ENCODE measurements at regions of chr11 and their contacts with region 1.

Region 1: GRCh38 chr11:3217676-3218482 is 734 bp downstream of the MRGPRG start:
- DNase-seq: peak; percentile 12 to 65 (median 58)
- ATAC-seq: peak in 1 of 2 donors; percentile 2
- H3K4me3 ChIP-seq: no peak overlapping the region
- H3K27ac ChIP-seq: no peak overlapping the region
- H3K4me1 ChIP-seq: no peaks in the 10 kb centered on the region
- H3K27me3 ChIP-seq: no peaks in the 10 kb centered on the region

Region 2: DNA sequence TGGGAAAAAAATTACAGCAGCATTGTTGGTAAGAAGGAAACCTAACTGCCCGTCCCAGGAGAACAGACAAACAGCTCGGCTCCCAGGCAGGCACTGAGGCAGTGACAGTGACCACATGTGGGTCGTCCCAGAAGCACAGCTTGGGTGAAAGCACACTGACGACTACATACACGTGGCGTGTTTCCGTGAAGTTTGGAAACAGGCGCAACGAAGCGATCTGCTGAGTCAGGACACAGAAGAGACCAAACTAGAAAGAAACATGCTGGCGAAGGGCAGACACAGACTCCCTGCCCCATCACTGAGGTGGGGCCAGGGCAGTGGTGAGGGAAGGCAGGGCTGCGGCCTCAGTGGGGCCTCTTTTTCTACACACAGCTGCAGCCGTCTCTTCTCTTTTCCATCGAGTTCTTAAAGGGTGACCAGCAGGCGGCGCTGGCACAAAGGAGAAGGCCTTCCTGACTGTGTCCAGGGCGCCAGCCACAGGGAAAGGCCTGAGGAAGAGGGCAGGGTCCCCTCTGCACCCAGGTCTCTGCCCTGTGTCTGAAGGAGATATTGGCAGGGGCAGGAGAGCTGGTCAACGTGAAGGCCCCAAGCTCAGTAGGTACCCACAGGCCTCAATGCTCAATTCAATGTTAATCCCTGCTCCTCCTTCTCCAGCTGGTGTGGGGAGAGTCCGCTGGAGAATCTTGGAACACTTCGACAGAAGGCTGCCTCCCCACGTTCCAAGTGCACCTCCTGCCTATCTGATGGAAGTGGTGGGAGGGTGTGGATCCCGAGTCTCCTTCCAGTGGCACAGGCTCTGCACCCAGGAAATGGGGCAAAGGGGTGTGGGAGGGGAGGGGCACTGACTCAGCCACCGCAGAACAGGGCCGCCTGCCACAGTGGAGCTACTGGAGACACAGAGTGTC is 180.6 kb before region 1 on chr11:
- intact Hi-C with region 1: loop called in 3 of 4 experiments (anchors 5 to 10 kb)
- DNase-seq: peak; percentile 83 to 95 (median 92)
- ATAC-seq: peak; percentile 79 to 85
- H3K4me3 ChIP-seq: no peak overlapping the region
- H3K27ac ChIP-seq: no peak overlapping the region
- H3K4me1 ChIP-seq: no peaks in the 10 kb centered on the region
- H3K27me3 ChIP-seq: no peaks in the 10 kb centered on the region

Region 3: DNA sequence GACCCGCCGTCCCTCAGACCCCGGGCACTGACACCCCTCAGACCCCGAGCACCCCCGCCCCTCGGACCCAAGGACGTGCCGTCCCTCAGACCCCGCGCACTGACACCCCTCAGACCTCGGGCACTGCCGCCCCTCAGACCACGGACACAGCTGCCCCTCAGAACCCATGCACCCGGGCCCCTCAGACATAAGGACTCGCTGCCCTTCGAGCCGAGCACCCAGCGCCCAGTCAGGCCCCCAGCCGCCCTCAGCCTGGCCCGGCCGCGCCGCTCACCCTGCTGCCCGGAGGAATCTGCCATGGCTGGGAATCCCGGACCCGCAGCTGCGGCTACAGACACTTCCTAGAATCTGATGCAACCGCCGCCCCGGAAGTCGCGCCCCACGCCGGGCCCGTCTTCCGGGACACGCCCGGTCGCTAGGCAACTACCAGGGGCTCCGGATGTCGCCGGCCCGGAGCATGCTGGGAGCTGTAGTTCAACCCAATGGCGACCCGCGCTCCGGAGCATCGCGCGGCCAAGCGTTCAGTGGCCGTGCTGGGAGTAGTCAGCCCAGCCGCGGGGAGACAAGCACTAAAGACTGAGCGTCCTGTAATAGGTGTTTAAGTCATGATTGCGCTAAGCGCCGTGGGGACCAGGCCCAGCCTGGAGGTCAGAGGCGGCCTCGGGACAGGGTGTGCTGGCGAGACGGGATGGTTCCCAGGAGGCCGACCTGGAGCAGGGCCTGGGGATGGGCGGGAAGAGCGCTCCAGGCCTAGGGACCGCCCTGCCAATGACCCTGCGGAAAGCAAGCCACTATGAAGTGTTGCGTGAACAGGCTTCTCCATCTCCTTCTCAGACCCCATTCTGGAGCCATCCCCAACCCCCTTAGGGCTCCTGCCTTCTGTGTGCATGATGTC is 160.6 kb before region 1 on chr11 and contains the start of gene CARS1:
- intact Hi-C with region 1: no loop called
- DNase-seq: peak; percentile 98 to 99 (median 98)
- ATAC-seq: peak; percentile 98
- H3K4me3 ChIP-seq: peak within 1 kb of the TSS; percentile 83
- H3K27ac ChIP-seq: peak within 1 kb of the TSS; percentile 80
- H3K4me1 ChIP-seq: peaks cover 3% of the 10 kb centered on the region
- H3K27me3 ChIP-seq: no peaks in the 10 kb centered on the region
- total RNA-seq, gene CARS1: 14.4 to 18.8 (median 16.5) TPM

Region 4: GRCh38 chr11:3109921-3110706 is 107.8 kb before region 1 on chr11:
- intact Hi-C with region 1: loop called in 2 of 4 experiments (anchors 5 to 10 kb)
- DNase-seq: peak; percentile 34 to 74 (median 62)
- ATAC-seq: peak; percentile 63
- H3K4me3 ChIP-seq: no peak overlapping the region
- H3K27ac ChIP-seq: no peak overlapping the region
- H3K4me1 ChIP-seq: no peaks in the 10 kb centered on the region
- H3K27me3 ChIP-seq: no peaks in the 10 kb centered on the region